Endothelial cell of umbilical vein (primary cell): ENCODE measurements at regions of chr4 and their contacts with region 1.

Region 1: DNA sequence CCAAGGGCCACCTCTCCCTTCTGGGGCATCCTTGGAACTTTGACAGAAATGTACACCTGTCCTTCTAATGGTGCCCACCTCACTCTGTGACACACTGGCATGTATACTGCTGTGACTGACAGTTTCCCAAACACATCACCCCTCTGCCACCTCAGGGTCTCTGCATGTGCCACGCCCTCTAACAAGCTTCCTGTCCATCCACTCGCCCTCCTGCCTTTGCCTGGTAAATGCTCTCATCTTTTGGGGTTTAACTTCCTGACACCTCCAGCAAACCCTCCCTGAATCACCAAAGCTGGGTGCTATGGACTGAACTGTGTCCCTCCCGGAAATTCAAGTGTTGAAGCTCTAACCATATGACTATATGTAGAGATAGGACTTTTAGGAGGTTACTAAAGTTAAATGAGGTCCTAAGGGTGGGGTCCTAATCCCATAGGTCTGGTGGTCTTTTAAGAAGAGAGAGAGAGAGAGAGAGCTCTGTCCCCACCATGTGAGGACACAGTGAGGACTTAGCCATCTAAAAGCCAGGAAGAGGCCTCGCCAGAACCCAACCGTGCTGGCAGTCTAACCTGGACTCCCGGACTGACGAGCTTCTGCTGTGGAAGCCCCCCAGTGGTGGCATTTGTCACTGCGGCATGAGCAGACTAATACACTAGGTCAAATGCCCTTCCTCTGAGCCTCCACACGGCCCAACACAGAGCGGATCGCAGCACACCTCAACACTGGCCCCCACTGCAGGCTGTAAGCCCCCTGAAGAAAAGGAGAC is 95.6 kb downstream of the AFAP1 start:
- DNase-seq: peak; percentile 91
- H3K4me3 ChIP-seq: peak overlapping the region in 1 of 3 experiments; percentile 24
- H3K27ac ChIP-seq: peak overlapping the region; percentile 98
- H3K4me1 ChIP-seq: peaks cover 60% of the 10 kb centered on the region
- H3K27me3 ChIP-seq: no peaks in the 10 kb centered on the region
- CTCF ChIP-seq: peak; percentile 80 to 86
- POLR2A ChIP-seq: no peak

Region 2: DNA sequence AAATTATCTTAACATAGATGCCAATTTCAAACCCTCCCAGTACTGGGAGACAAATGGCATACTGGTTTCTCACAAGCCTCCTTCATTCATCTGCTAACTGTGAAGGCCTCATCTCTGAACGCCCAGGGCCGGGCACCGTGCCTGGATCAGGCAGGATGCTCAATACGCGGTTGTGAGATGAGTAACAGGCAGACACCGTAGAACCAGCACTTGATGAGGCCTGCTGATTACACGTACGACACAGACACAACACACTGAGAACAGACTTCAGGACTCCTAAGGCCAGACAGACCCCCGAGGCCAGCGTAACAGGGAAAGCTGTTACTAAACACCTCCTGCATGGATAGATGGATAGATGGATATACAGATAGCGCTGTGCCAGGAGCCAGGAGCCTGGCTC is 59.0 kb before region 1 on chr4:
- CTCF ChIA-PET with region 1: no interaction called
- POLR2A ChIA-PET with region 1: no interaction called
- dilution Hi-C with region 1: no loop called
- intact Hi-C with region 1: no loop called
- DNase-seq: peak; percentile 67
- H3K4me3 ChIP-seq: no peak overlapping the region
- H3K27ac ChIP-seq: peak overlapping the region; percentile 93
- H3K4me1 ChIP-seq: peaks cover 62% of the 10 kb centered on the region
- H3K27me3 ChIP-seq: no peaks in the 10 kb centered on the region
- CTCF ChIP-seq: no peak
- POLR2A ChIP-seq: no peak

Region 3: DNA sequence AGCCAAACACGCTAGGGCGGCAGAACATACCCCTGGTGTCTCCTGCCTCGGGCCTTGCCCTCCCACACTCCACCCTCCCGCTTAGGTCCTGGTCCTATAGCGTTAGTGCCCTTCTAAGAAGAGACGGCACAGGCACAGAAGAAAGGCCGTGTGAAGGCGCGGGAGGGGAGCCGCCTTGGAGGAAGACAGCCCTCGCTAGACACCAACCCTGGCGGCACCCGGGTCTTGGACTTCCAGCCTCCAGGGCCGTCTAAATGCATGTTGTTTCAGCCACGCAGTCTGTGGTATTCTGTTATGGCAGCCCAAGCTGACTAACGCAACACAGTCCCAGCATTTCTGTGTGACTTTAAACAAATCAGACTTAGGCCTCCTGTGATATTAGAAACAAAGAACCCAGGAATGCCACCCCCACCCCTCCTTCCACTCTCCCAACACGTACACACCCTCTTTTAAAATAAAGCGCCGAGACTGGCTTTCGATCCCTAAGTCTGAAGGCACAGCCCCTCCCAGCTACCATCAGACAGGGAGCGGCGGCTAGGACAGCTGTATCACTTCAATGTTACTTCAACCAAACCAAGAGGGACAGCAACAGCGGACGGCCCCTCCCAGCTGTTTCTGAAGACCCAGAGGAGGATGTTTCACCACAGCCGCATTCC is 32.3 kb before region 1 on chr4:
- CTCF ChIA-PET with region 1: interaction called, 212 read pairs
- POLR2A ChIA-PET with region 1: interaction called, 13 read pairs
- dilution Hi-C with region 1: no loop called
- intact Hi-C with region 1: no loop called
- DNase-seq: no peak
- H3K4me3 ChIP-seq: no peak overlapping the region
- H3K27ac ChIP-seq: no peak overlapping the region
- H3K4me1 ChIP-seq: peaks cover 28% of the 10 kb centered on the region
- H3K27me3 ChIP-seq: no peaks in the 10 kb centered on the region
- CTCF ChIP-seq: no peak
- POLR2A ChIP-seq: no peak

Region 4: DNA sequence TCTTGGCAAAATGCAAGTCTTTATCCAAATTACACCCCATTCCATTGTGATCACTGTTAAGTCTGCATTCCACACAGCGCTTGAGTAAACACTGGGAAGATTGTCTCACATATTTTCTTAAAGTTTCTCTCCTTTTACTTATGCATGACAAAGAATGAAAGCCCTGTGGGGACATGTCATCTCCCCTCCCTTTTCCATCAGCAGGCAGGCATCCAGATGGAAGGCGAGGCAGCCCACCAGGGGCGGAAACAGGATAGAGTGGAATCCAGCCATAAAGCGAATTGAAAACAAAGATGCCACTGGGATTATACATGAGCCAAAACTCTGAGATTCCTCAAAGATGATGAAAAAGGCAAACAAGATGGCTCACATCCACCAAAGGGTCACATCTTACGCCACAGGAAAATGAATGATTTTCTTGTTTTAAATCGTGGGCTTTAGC is 17.4 kb after region 1 on chr4:
- CTCF ChIA-PET with region 1: interaction called, 10 read pairs
- POLR2A ChIA-PET with region 1: interaction called, 3 read pairs
- dilution Hi-C with region 1: no loop called
- intact Hi-C with region 1: loop called (anchors 1 kb)
- DNase-seq: peak; percentile 90
- H3K4me3 ChIP-seq: peak overlapping the region in 1 of 3 experiments; percentile 42
- H3K27ac ChIP-seq: peak overlapping the region; percentile 99
- H3K4me1 ChIP-seq: peaks cover 55% of the 10 kb centered on the region
- H3K27me3 ChIP-seq: no peaks in the 10 kb centered on the region
- CTCF ChIP-seq: no peak
- POLR2A ChIP-seq: no peak

Region 5: GRCh38 chr4:7904952-7905915 is 61.2 kb after region 1 on chr4:
- CTCF ChIA-PET with region 1: interaction called, 16 read pairs
- POLR2A ChIA-PET with region 1: no interaction called
- dilution Hi-C with region 1: no loop called
- intact Hi-C with region 1: loop called (anchors 1 kb)
- DNase-seq: no peak
- H3K4me3 ChIP-seq: no peak overlapping the region
- H3K27ac ChIP-seq: peak overlapping the region; percentile 75
- H3K4me1 ChIP-seq: peaks cover 94% of the 10 kb centered on the region
- H3K27me3 ChIP-seq: no peaks in the 10 kb centered on the region
- CTCF ChIP-seq: no peak
- POLR2A ChIP-seq: no peak

Region 6: DNA sequence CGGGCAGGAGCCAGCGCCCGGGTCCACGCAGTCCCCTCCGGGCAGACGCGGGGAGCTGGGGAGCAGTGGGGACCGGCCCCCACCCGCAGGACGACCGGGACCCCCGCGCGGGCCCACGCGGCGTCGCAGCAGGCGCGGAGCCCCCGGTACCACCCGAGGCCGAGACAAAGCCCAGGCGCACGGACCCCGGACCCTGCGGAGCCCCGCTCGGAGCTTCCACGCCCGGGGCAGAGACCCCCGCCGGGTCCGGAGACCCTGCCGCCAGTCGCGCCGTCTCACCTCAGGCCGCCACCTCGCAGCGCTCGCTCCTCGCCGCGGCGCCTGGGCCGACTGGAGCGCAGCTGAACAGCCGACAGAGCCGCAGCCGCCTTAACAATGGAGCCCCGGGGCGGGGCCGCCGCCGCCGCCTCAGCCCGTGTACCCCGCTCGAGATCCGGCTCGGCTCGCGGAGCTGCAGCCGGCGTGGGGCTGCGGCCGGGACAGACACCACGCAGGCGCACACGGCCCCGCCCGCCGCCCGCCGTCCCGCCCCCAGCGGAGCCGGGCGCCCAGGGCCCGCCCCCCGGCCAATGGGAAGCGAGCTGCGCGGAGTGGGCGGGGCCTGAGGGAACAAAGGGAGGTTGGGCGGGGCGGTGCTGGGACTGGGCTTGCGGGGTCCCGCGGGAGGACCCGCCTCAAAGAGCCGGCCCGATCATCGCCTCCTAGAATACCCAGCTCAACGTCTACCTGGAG is 95.5 kb after region 1 on chr4 and contains the start of gene AFAP1:
- CTCF ChIA-PET with region 1: interaction called, 25 read pairs
- POLR2A ChIA-PET with region 1: interaction called, 3 read pairs
- dilution Hi-C with region 1: no loop called
- intact Hi-C with region 1: loop called (anchors 1 kb)
- DNase-seq: peak; percentile 93
- H3K4me3 ChIP-seq: peak within 1 kb of the TSS; percentile 47 to 93 (median 88)
- H3K27ac ChIP-seq: peak within 1 kb of the TSS; percentile 80
- H3K4me1 ChIP-seq: peaks cover 31% of the 10 kb centered on the region
- H3K27me3 ChIP-seq: no peaks in the 10 kb centered on the region
- CTCF ChIP-seq: no peak
- POLR2A ChIP-seq: peak; percentile 93
- total RNA-seq, gene AFAP1: 93.3 and 103 TPM in 2 replicates

Region 7: GRCh38 chr4:7987148-7987989 is 143.4 kb after region 1 on chr4:
- CTCF ChIA-PET with region 1: interaction called, 15 read pairs
- POLR2A ChIA-PET with region 1: no interaction called
- dilution Hi-C with region 1: no loop called
- intact Hi-C with region 1: loop called (anchors 1 kb)
- DNase-seq: peak; percentile 74
- H3K4me3 ChIP-seq: no peak overlapping the region
- H3K27ac ChIP-seq: no peak overlapping the region
- H3K4me1 ChIP-seq: peaks cover 12% of the 10 kb centered on the region
- H3K27me3 ChIP-seq: no peaks in the 10 kb centered on the region
- CTCF ChIP-seq: peak; percentile 84 to 86
- POLR2A ChIP-seq: no peak